ENCODE measurements at regions of chr4 and their contacts with region 1.

Region 1: DNA sequence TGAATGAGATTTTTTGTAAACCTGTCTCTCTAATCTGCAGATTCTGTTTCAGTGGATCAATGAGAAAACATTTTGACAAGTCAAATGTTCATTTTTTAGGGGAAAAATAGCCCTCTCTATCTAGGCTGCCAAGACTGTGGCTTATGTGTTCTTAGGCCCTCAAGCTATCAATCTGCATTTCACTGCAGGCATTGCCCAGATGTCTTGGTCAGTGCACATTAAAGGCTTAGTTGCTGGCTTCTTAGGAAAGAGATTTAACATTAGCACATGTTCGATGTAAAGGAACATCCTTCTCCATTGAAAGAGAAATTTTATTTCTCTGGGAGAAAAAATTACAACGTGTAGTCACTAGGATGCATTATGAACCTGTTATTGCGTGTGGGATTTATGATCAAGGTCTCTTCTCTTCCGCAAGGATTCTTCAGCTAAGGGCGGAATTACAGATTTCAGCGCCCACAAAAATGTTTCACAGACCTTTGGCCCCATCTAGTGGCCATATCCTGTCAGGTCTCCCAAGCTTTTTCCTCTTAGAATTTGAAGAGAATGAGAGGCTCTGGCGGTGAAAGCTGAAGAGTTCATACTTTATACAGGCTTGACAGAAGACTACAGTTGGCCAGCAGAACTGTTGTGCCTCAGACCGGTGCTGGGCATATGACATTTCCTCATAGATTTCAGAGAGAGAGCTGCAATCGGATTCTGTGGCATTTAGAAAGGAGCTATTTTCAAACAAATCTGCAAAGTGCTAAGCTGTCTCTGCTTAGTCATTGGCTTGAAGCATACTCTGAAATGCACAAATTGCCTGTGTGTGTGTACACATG is 144.6 kb upstream of the NOCT start:
- DNase-seq: peak; percentile 77
- H3K4me3 ChIP-seq: no peak overlapping the region
- H3K27ac ChIP-seq: no peak overlapping the region
- H3K4me1 ChIP-seq: peaks cover 5% of the 10 kb centered on the region
- H3K27me3 ChIP-seq: peaks cover 3 to 6% of the 10 kb centered on the region in 2 experiments
- CTCF ChIP-seq: peak; percentile 66 to 71
- POLR2A ChIP-seq: no peak

Region 2: GRCh38 chr4:137735561-137736104 is 1135.3 kb before region 1 on chr4:
- CTCF ChIA-PET with region 1: interaction called, 9 read pairs
- POLR2A ChIA-PET with region 1: no interaction called
- dilution Hi-C with region 1: no loop called
- intact Hi-C with region 1: loop called (anchors 10 kb)
- DNase-seq: no peak
- H3K4me3 ChIP-seq: no peak overlapping the region
- H3K27ac ChIP-seq: no peak overlapping the region
- H3K4me1 ChIP-seq: no peaks in the 10 kb centered on the region
- H3K27me3 ChIP-seq: no peaks in the 10 kb centered on the region
- CTCF ChIP-seq: no peak
- POLR2A ChIP-seq: no peak

Region 3: GRCh38 chr4:138090150-138090917 is 780.6 kb before region 1 on chr4:
- CTCF ChIA-PET with region 1: interaction called, 11 read pairs
- POLR2A ChIA-PET with region 1: no interaction called
- dilution Hi-C with region 1: no loop called
- intact Hi-C with region 1: loop called (anchors 5 kb)
- DNase-seq: peak; percentile 90
- H3K4me3 ChIP-seq: peak overlapping the region in 2 of 3 experiments; percentile 11 to 53
- H3K27ac ChIP-seq: no peak overlapping the region
- H3K4me1 ChIP-seq: peaks cover 6% of the 10 kb centered on the region
- H3K27me3 ChIP-seq: no peaks in the 10 kb centered on the region
- CTCF ChIP-seq: peak; percentile 60 to 62
- POLR2A ChIP-seq: no peak

Region 4: DNA sequence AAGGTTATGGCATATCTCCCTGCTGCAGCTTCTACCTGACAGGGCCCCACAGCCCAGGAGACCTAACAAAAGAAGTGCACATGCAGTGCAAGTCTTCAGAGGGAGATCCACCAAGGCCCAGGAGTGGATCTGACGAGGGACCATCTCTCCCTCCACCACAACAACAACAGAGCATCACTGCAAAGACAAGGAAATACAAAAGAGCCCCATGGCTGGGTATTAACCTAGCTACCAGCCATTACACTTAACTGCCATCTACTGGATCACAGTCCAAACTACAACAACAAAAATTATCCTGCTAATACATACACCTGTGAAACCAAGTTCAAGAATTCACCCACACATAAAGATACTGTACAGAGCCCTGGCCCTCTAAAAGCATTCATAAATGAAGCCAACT is 348.6 kb before region 1 on chr4:
- CTCF ChIA-PET with region 1: interaction called, 21 read pairs
- POLR2A ChIA-PET with region 1: no interaction called
- dilution Hi-C with region 1: no loop called
- intact Hi-C with region 1: loop called (anchors 5 kb)
- DNase-seq: peak; percentile 21
- H3K4me3 ChIP-seq: no peak overlapping the region
- H3K27ac ChIP-seq: no peak overlapping the region
- H3K4me1 ChIP-seq: no peaks in the 10 kb centered on the region
- H3K27me3 ChIP-seq: no peaks in the 10 kb centered on the region
- CTCF ChIP-seq: peak; percentile 27 to 40
- POLR2A ChIP-seq: no peak

Region 5: GRCh38 chr4:138686106-138686835 is 184.7 kb before region 1 on chr4:
- CTCF ChIA-PET with region 1: interaction called, 43 read pairs
- POLR2A ChIA-PET with region 1: no interaction called
- dilution Hi-C with region 1: no loop called
- intact Hi-C with region 1: loop called (anchors 1 kb)
- DNase-seq: no peak
- H3K4me3 ChIP-seq: no peak overlapping the region
- H3K27ac ChIP-seq: no peak overlapping the region
- H3K4me1 ChIP-seq: no peaks in the 10 kb centered on the region
- H3K27me3 ChIP-seq: peaks cover 23 to 38% of the 10 kb centered on the region in 2 experiments
- CTCF ChIP-seq: no peak
- POLR2A ChIP-seq: no peak

Region 6: DNA sequence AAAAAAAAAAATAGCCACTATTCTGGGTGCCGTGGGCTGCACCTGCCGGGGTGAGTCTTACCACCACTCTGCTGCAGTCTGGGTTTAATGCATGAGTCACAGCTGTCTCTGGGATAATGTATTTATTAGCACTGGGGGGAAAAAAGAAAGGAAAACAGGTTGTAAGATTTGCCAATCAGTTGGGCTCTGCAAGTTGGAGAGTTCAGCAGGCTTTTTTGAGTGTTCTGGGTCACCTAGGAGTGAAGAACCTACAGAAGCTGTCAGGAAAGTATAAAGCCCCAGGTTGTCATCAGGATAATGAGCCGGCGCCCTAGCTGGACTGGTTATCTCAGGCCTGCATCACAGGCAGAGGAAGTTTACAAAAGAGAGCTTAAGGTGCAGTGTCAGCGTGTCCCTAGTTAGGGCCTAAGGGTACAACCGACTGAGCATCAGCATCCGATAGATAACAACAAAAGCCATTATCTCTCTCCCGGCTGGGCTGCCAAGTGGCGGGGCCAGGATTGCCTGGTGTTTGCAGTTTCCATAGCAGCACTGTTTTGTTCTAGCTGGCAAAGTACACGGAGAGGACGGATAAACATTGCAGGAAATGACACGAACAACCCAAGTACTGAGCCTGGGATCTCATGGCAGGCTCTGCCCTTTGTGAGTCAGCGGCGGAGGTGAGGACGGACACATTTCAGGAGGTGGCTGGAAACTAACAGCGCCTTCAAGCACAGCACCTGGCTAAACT is 39.8 kb after region 1 on chr4:
- CTCF ChIA-PET with region 1: interaction called, 19 read pairs
- POLR2A ChIA-PET with region 1: no interaction called
- dilution Hi-C with region 1: no loop called
- intact Hi-C with region 1: loop called (anchors 1 kb)
- DNase-seq: peak; percentile 99
- H3K4me3 ChIP-seq: peak overlapping the region in 1 of 3 experiments; percentile 36
- H3K27ac ChIP-seq: peak overlapping the region; percentile 97
- H3K4me1 ChIP-seq: peaks cover 16% of the 10 kb centered on the region
- H3K27me3 ChIP-seq: no peaks in the 10 kb centered on the region
- CTCF ChIP-seq: no peak
- POLR2A ChIP-seq: no peak

Measured in endothelial cell of umbilical vein (primary cell).